ENCODE measurements at regions of chr5 and their contacts with region 1.

Region 1: DNA sequence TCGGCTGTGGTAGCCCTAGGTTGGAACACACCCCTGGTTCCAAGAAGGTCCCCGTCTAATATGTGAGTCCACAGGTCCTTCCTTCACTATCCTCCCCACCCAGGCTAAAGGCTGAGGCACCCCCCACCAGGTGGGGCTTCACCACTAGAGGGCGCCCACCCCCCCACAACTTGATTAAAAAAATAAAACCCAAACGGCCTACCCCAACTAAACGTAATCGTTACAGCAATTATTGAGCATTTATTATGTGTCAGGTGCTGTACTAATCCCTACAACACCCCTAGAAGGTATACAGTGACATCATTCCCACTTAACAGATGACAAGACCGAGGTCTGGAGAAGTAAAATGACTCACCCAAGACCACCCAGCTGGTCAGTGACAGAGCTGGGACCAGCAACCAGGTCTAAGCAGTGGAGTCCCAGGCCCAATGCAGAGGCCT is 65.0 kb downstream of the FGF18 start:
- DNase-seq: peak; percentile 58
- H3K4me3 Mint-ChIP-seq: no peak overlapping the region
- H3K27ac Mint-ChIP-seq: no peak overlapping the region
- H3K4me1 Mint-ChIP-seq: peaks cover 9% of the 10 kb centered on the region
- H3K27me3 Mint-ChIP-seq: peaks cover 19% of the 10 kb centered on the region
- CTCF ChIP-seq: peak; percentile 96

Region 2: GRCh38 chr5:169826618-169827017 is 1657.9 kb before region 1 on chr5:
- CTCF ChIA-PET with region 1: no interaction called
- POLR2A ChIA-PET with region 1: no interaction called
- intact Hi-C with region 1: no loop called
- DNase-seq: no peak
- H3K4me3 Mint-ChIP-seq: no peak overlapping the region
- H3K27ac Mint-ChIP-seq: no peak overlapping the region
- H3K4me1 Mint-ChIP-seq: peaks cover 7% of the 10 kb centered on the region
- H3K27me3 Mint-ChIP-seq: peaks cover 10% of the 10 kb centered on the region
- CTCF ChIP-seq: no peak

Region 3: DNA sequence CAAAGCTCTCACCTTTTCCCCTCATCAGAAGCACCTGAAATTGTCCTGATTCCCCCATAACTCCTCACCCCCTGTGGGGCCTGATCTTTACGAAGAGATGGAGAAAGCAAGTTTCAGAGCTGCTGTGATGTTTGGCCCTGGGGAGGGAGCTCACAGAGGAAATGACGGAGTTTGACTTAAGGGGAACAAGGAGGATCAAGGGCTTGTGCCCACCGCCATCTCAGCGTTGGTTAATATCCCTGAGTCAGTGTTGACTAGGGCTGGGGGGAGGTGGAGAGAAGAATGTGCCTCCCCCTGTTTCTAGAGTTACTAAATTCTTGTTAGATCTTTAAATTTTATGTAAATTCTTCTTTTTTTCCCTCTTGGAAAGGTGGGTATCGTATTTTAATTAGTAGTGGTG is 37.3 kb before region 1 on chr5:
- CTCF ChIA-PET with region 1: interaction called, 10 read pairs
- POLR2A ChIA-PET with region 1: no interaction called
- intact Hi-C with region 1: no loop called
- DNase-seq: no peak
- H3K4me3 Mint-ChIP-seq: no peak overlapping the region
- H3K27ac Mint-ChIP-seq: no peak overlapping the region
- H3K4me1 Mint-ChIP-seq: no peaks in the 10 kb centered on the region
- H3K27me3 Mint-ChIP-seq: no peaks in the 10 kb centered on the region
- CTCF ChIP-seq: no peak

Region 4: DNA sequence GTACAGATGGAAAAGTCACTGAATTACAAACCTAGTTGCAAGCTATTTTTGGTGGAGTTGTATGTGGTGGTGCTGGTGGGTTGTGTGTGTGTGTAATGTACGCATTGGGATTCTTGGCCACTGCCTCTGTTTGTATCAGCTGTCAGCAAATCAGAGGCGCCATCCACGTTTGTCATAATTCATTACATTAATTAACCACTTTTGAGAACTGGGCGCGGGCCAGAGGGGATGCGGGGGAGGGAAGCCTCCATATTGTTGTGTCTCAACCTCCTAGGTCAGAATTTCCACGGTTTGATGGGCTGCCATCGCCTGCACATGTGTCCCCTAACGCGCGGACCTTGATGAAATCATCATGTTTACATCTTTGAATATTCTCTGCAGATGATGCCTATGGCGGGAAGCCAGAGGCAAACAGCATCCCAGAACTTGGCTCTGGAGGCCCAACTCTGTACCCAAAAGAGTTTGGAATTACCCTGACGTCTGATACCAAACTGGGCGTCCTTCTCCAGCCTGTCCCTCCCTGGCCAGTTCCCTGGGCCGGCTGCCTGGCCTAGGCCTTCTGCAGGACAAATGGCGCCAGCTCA is 10.2 kb before region 1 on chr5:
- CTCF ChIA-PET with region 1: interaction called, 19 read pairs
- POLR2A ChIA-PET with region 1: interaction called, 3 read pairs
- intact Hi-C with region 1: no loop called
- DNase-seq: no peak
- H3K4me3 Mint-ChIP-seq: no peak overlapping the region
- H3K27ac Mint-ChIP-seq: no peak overlapping the region
- H3K4me1 Mint-ChIP-seq: no peaks in the 10 kb centered on the region
- H3K27me3 Mint-ChIP-seq: peaks cover 14% of the 10 kb centered on the region
- CTCF ChIP-seq: no peak

Region 5: DNA sequence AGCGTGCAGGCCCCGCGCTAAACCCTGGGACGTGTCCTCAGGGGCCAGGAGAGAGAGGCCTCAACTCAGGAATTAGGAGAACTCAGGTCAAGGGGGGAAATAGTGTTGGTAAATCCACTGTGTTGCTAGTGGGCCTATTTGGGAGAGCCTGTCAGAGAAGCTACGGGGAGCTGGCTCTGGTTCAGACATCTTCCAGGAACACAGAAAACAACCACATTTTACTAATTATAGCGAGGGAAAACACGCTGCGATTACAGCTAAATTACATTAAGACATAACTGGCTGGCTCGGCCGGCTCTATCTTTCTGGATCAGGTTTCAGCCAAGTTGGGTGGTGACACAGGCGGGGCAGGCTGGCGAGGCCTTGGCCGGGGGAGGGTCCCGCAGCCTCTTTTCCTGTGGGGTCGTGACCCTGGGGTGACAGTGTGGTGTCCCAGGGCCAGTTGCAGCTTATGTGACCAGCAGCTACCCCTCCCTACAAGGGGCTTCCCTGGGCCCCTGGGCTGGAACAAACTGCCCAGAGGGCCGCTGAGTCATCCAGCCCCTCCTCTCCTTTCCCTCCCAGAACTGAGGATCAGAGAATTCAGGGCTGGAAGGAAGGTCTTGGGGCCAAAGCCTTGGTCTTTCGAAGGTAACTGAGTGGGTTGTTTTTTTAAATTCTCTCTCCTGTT is 10.1 kb after region 1 on chr5:
- CTCF ChIA-PET with region 1: interaction called, 28 read pairs
- POLR2A ChIA-PET with region 1: no interaction called
- intact Hi-C with region 1: no loop called
- DNase-seq: peak; percentile 91
- H3K4me3 Mint-ChIP-seq: peak overlapping the region; percentile 67
- H3K27ac Mint-ChIP-seq: peak overlapping the region; percentile 57
- H3K4me1 Mint-ChIP-seq: peaks cover 26% of the 10 kb centered on the region
- H3K27me3 Mint-ChIP-seq: peaks cover 17% of the 10 kb centered on the region
- CTCF ChIP-seq: no peak

Region 6: DNA sequence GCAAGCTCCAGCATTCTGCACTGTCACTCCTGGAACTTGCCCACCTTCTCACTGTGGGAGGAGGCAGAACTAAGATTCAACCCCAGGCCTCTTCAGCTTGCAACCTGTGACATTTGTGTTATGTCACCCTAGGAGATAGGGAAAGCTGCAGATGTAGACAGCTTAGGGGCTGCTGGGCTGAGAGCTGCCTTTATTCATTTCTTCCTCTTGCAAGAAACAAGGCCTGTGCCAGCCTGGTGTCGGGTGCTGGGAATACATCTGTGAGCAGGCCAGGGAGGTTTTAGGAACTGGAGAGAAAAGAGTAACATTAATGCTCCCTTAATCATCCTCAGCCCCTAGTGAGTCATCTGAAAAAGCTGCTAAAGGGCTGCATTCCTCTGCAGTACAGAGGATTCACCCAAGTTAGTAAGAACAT is 36.7 kb after region 1 on chr5:
- CTCF ChIA-PET with region 1: interaction called, 12 read pairs
- POLR2A ChIA-PET with region 1: no interaction called
- intact Hi-C with region 1: no loop called
- DNase-seq: peak; percentile 87
- H3K4me3 Mint-ChIP-seq: peak overlapping the region; percentile 26
- H3K27ac Mint-ChIP-seq: peak overlapping the region; percentile 88
- H3K4me1 Mint-ChIP-seq: peaks cover 23% of the 10 kb centered on the region
- H3K27me3 Mint-ChIP-seq: no peaks in the 10 kb centered on the region
- CTCF ChIP-seq: peak; percentile 25

Region 7: GRCh38 chr5:171838086-171838485 is 353.6 kb after region 1 on chr5:
- CTCF ChIA-PET with region 1: interaction called, 13 read pairs
- POLR2A ChIA-PET with region 1: no interaction called
- intact Hi-C with region 1: no loop called
- DNase-seq: no peak
- H3K4me3 Mint-ChIP-seq: no peak overlapping the region
- H3K27ac Mint-ChIP-seq: no peak overlapping the region
- H3K4me1 Mint-ChIP-seq: no peaks in the 10 kb centered on the region
- H3K27me3 Mint-ChIP-seq: no peaks in the 10 kb centered on the region
- CTCF ChIP-seq: no peak

Region 8: DNA sequence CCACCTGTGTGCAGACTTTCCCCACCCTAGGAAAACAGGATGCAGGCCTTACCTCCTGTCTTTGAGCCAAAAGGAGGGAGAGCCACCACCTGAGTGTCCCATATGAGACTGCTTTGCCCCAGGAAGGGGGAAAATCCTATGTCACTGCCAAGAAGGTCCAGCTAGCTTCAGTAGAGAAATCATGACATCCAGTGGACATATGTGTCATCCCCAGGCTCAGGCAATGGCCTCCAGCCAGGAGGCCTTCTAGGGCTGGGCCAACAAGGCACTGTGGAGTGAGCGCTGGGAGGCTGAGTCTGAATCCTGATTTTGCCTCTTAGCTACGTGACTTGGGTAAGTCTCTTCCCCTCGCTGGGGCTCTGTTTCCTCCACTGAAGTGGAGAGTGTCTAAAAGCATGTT is 361.4 kb after region 1 on chr5:
- CTCF ChIA-PET with region 1: interaction called, 18 read pairs
- POLR2A ChIA-PET with region 1: no interaction called
- intact Hi-C with region 1: loop called (anchors 2 kb)
- DNase-seq: peak; percentile 55
- H3K4me3 Mint-ChIP-seq: no peak overlapping the region
- H3K27ac Mint-ChIP-seq: no peak overlapping the region
- H3K4me1 Mint-ChIP-seq: no peaks in the 10 kb centered on the region
- H3K27me3 Mint-ChIP-seq: no peaks in the 10 kb centered on the region
- CTCF ChIP-seq: no peak

Region 9: GRCh38 chr5:172334196-172334595 is 849.7 kb after region 1 on chr5:
- CTCF ChIA-PET with region 1: no interaction called
- POLR2A ChIA-PET with region 1: no interaction called
- intact Hi-C with region 1: no loop called
- DNase-seq: no peak
- H3K4me3 Mint-ChIP-seq: no peak overlapping the region
- H3K27ac Mint-ChIP-seq: no peak overlapping the region
- H3K4me1 Mint-ChIP-seq: no peaks in the 10 kb centered on the region
- H3K27me3 Mint-ChIP-seq: no peaks in the 10 kb centered on the region
- CTCF ChIP-seq: no peak